ENCODE measurements at regions of chr12 and their contacts with region 1.

Region 1: GRCh38 chr12:117367011-117367638 is 5.7 kb upstream of the NOS1 start:
- DNase-seq: peak; percentile 66 to 95
- H3K4me3 ChIP-seq: no peak overlapping the region
- H3K27ac ChIP-seq: no peak overlapping the region
- H3K4me1 ChIP-seq: no peaks in the 10 kb centered on the region; a peak in 2 of 7 replicates
- H3K27me3 ChIP-seq: peaks cover 5 to 26% (median 18%) of the 10 kb centered on the region in 4 experiments
- CTCF ChIP-seq: peak; percentile 78 to 96 (median 95)
- EP300 ChIP-seq: no peak
- POLR2A ChIP-seq: no peak
- RAD21 ChIP-seq: peak; percentile 97 to 99

Region 2: GRCh38 chr12:117236456-117237001 is 130.6 kb before region 1 on chr12:
- CTCF ChIA-PET with region 1: interaction called, 33 read pairs
- POLR2A ChIA-PET with region 1: interaction called, 5 read pairs
- DNase-seq: peak; percentile 88 to 100
- H3K4me3 ChIP-seq: peak overlapping the region in 1 of 4 experiments; percentile 27; a peak in 1 of 8 replicates
- H3K27ac ChIP-seq: no peak overlapping the region; the same call in 1 of the 2 replicates
- H3K4me1 ChIP-seq: peaks cover 6 to 11% (median 9%) of the 10 kb centered on the region in 4 experiments; a peak in 4 of 7 replicates
- H3K27me3 ChIP-seq: no peaks in the 10 kb centered on the region
- CTCF ChIP-seq: peak; percentile 67 to 82 (median 72)
- EP300 ChIP-seq: peak in 1 of 2 experiments; percentile 20; a peak in 1 of 3 replicates
- POLR2A ChIP-seq: peak; percentile 22 to 82
- RAD21 ChIP-seq: peak; percentile 75 to 85

Region 3: DNA sequence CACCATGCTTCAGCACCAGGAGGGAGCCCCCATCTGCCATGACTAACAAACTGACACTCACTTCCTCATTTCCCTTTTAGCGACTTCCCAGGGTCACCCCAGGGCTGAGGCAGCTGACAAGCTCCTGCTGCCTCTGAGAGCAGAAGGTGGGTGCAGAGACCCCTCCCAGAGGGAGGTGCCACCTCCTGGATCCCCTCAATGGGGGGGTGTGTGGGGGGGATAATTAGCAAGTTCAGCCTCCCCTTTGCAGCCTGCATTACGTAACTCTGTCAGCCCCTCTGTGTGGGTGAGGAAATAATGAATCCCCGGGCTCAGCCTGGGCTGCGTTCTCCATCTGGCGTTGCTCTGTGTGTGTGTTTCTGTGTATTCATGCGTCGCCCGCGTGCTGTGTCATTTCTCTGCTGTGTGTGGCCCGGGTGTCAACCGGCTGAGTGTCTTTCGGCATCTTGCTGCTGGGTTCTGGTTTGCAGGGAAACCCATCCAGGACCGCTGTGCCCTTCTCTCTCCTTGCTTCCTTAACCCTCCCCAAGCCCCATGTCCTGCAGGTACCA is 33.7 kb before region 1 on chr12:
- CTCF ChIA-PET with region 1: no interaction called
- POLR2A ChIA-PET with region 1: no interaction called
- DNase-seq: no peak
- H3K4me3 ChIP-seq: no peak overlapping the region
- H3K27ac ChIP-seq: no peak overlapping the region
- H3K4me1 ChIP-seq: peaks cover 0 to 5% (median 0%) of the 10 kb centered on the region in 4 experiments; a peak in 3 of 7 replicates
- H3K27me3 ChIP-seq: no peaks in the 10 kb centered on the region
- CTCF ChIP-seq: no peak
- EP300 ChIP-seq: no peak
- POLR2A ChIP-seq: no peak
- RAD21 ChIP-seq: no peak

Region 4: DNA sequence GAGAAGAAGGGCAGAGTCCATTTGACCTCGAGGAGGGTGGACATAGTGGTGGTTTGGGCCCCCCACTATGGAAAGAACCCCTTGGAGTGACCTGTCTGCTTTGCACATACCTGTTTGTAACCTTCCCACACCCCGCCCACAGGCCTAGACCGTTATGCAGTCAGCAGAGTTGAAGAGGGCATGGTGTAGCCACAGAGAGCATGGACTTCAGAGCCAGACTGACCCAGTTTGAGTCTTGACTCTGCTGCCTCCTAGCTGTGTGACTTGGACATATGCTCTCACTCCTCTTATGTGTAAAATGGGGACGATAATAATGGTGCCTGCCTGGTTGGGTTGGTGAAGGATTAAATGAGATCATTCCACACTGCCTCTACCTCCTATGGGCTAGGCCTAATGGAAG is 35.2 kb after region 1 on chr12:
- CTCF ChIA-PET with region 1: interaction called, 22 read pairs
- POLR2A ChIA-PET with region 1: no interaction called
- DNase-seq: no peak
- H3K4me3 ChIP-seq: no peak overlapping the region
- H3K27ac ChIP-seq: no peak overlapping the region
- H3K4me1 ChIP-seq: no peaks in the 10 kb centered on the region
- H3K27me3 ChIP-seq: no peaks in the 10 kb centered on the region
- CTCF ChIP-seq: peak; percentile 50 to 77 (median 65)
- EP300 ChIP-seq: no peak
- POLR2A ChIP-seq: no peak
- RAD21 ChIP-seq: peak; percentile 62 to 75

Region 5: DNA sequence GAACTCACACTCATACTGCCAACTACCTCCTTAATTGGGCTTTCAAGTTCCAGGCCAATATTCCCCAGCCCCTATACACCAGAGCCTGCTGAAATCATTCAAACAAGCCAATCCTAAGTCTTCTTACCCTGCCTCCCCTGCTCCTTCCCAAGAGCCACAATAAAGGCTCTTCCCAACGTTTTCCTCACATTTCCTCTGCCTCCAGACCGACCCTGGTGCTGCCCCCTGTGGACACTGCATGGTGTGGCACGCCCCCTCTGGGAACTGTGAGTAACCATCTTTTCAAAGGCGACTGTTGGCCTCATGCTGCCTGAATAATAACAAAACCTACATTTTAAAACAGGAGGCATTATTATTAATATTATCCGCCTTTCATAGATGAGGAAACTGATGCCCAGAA is 105.9 kb after region 1 on chr12:
- CTCF ChIA-PET with region 1: interaction called, 23 read pairs
- POLR2A ChIA-PET with region 1: no interaction called
- DNase-seq: peak; percentile 36 to 84
- H3K4me3 ChIP-seq: no peak overlapping the region
- H3K27ac ChIP-seq: no peak overlapping the region
- H3K4me1 ChIP-seq: peaks cover 0 to 3% (median 0%) of the 10 kb centered on the region in 4 experiments; a peak in 3 of 7 replicates
- H3K27me3 ChIP-seq: no peaks in the 10 kb centered on the region
- CTCF ChIP-seq: peak; percentile 90 to 97 (median 97)
- EP300 ChIP-seq: no peak
- POLR2A ChIP-seq: no peak
- RAD21 ChIP-seq: peak; percentile 60 to 70

Region 6: GRCh38 chr12:117593815-117594400 is 226.8 kb after region 1 on chr12:
- CTCF ChIA-PET with region 1: interaction called, 89 read pairs
- POLR2A ChIA-PET with region 1: no interaction called
- DNase-seq: no peak
- H3K4me3 ChIP-seq: no peak overlapping the region
- H3K27ac ChIP-seq: no peak overlapping the region
- H3K4me1 ChIP-seq: peaks cover 0 to 4% (median 2%) of the 10 kb centered on the region in 4 experiments; a peak in 4 of 7 replicates
- H3K27me3 ChIP-seq: no peaks in the 10 kb centered on the region
- CTCF ChIP-seq: no peak
- EP300 ChIP-seq: no peak
- POLR2A ChIP-seq: no peak
- RAD21 ChIP-seq: no peak

Region 7: DNA sequence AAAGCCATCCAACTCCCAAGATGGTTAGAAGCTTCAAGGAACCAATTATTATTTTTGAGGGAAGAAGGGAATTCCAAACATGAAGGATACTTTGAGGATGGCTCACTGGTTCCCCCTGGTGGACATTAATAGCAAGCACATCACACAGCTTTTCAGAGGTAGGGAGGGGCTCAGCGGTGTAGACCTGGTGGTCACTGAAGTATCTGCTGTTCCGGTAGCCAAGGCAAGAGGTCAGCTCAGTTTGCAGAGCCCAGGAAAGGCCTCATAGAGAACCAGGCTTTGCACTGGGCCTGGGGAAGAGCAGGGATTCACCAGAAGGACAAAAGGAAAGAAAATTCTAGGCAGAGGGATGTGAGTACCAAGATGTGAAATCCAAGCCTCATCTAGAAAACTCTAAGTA is 482.9 kb after region 1 on chr12:
- CTCF ChIA-PET with region 1: interaction called, 31 read pairs
- POLR2A ChIA-PET with region 1: no interaction called
- DNase-seq: peak; percentile 29 to 57
- H3K4me3 ChIP-seq: no peak overlapping the region
- H3K27ac ChIP-seq: no peak overlapping the region
- H3K4me1 ChIP-seq: peaks cover 0 to 10% (median 3%) of the 10 kb centered on the region in 4 experiments; a peak in 4 of 7 replicates
- H3K27me3 ChIP-seq: no peaks in the 10 kb centered on the region
- CTCF ChIP-seq: peak; percentile 63 to 98 (median 94)
- EP300 ChIP-seq: no peak
- POLR2A ChIP-seq: no peak
- RAD21 ChIP-seq: peak; percentile 77 to 81

Measured in H1 (cell line).